Activated CD4-positive, alpha-beta T cell treated with anti-CD3 and anti-CD28 coated beads for 36 hours (primary cell): ENCODE measurements at regions of chr1 and their contacts with region 1.

Region 1: GRCh38 chr1:160474392-160475242 is 48.4 kb downstream of the SLAMF6 start:
- DNase-seq: no peak
- ATAC-seq: peak; percentile 93
- H3K4me3 Mint-ChIP-seq: no peak overlapping the region
- H3K27ac Mint-ChIP-seq: no peak overlapping the region
- H3K4me1 Mint-ChIP-seq: peaks cover 6% of the 10 kb centered on the region
- H3K27me3 Mint-ChIP-seq: no peaks in the 10 kb centered on the region

Region 2: GRCh38 chr1:160137216-160137862 is 337.3 kb before region 1 on chr1:
- CTCF ChIA-PET with region 1: no interaction called
- POLR2A ChIA-PET with region 1: no interaction called
- intact Hi-C with region 1: no loop called
- DNase-seq: no peak
- ATAC-seq: no peak
- H3K4me3 Mint-ChIP-seq: no peak overlapping the region
- H3K27ac Mint-ChIP-seq: no peak overlapping the region
- H3K4me1 Mint-ChIP-seq: no peaks in the 10 kb centered on the region
- H3K27me3 Mint-ChIP-seq: peaks cover 6% of the 10 kb centered on the region

Region 3: DNA sequence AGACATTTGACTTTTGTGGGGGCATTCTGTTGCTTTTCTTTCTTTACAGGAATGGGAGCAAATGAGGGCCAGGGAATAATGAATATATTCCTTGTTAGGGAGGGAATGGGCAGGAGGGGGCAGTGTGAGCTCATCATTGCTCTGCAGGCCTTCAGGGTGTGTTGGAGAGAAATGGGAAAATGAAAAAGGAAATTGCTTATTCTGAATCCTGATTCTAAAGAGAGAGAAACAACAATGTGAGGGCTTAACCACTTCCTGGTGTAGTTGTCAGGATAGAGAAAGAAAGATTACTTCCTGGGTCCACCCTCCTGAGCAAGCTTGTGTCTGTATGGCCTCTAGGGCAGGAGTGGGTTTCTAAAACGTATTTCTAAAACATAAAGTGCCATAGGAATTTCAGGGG is 46.0 kb before region 1 on chr1:
- CTCF ChIA-PET with region 1: interaction called, 4 read pairs
- POLR2A ChIA-PET with region 1: no interaction called
- intact Hi-C with region 1: loop called (anchors 1 kb)
- DNase-seq: peak; percentile 60
- ATAC-seq: peak; percentile 51
- H3K4me3 Mint-ChIP-seq: peak overlapping the region; percentile 32
- H3K27ac Mint-ChIP-seq: peak overlapping the region; percentile 94
- H3K4me1 Mint-ChIP-seq: peaks cover 63% of the 10 kb centered on the region
- H3K27me3 Mint-ChIP-seq: no peaks in the 10 kb centered on the region